Aorta (tissue), 5 donors: ENCODE measurements at regions of chr9 and their contacts with region 1.

Region 1: GRCh38 chr9:22238809-22239684 is 207.6 kb upstream of the DMRTA1 start:
- DNase-seq: no peak
- ATAC-seq: no peak
- H3K4me3 ChIP-seq: no peak overlapping the region
- H3K27ac ChIP-seq: no peak overlapping the region
- H3K4me1 ChIP-seq: no peaks in the 10 kb centered on the region
- H3K27me3 ChIP-seq: no peaks in the 10 kb centered on the region

Region 2: DNA sequence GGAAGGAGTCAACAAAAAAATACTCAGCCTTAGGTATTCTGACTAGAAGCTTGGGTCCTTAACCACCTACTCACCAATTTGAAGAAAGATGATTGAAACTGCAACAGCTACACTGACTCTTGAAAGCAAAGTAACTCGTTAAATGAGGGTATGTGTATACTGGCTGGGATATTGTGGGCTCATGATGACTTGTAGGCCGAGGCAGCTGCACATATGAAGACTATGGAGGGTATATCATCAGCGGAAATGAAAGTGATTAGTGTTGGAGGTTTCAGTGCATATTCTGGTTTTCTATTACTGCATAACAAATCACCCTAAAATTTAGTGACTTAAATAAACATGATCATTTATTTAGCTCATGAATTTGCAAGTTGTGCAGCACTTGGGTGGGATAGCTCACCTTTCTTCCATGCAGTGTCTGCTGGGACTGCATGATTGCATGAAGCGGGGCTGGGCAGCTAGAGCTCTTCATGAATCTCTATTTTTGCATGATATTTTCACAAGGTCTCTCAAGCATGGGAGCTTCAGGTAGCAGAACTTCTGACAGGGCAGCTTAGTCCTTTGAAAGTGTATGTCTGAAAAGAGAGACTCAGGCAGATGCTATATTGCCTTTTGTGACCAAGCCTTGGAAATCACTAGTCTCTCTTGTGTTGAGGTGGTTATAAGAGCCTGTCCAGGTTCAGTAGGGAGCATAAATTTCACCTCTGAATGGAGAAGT is 133.9 kb before region 1 on chr9:
- intact Hi-C with region 1: loop called in 1 of 2 experiments (anchors 10 kb)
- DNase-seq: no peak
- ATAC-seq: no peak
- H3K4me3 ChIP-seq: no peak overlapping the region
- H3K27ac ChIP-seq: no peak overlapping the region
- H3K4me1 ChIP-seq: peaks cover 0 to 3% of the 10 kb centered on the region in 2 donors
- H3K27me3 ChIP-seq: no peaks in the 10 kb centered on the region

Region 3: GRCh38 chr9:22316645-22317044 is 77.6 kb after region 1 on chr9:
- intact Hi-C with region 1: no loop called
- DNase-seq: no peak
- ATAC-seq: no peak
- H3K4me3 ChIP-seq: no peak overlapping the region
- H3K27ac ChIP-seq: no peak overlapping the region
- H3K4me1 ChIP-seq: no peaks in the 10 kb centered on the region
- H3K27me3 ChIP-seq: no peaks in the 10 kb centered on the region